Psoas muscle (tissue), 8 donors: ENCODE measurements at regions of chr16 and their contacts with region 1.

Region 1: DNA sequence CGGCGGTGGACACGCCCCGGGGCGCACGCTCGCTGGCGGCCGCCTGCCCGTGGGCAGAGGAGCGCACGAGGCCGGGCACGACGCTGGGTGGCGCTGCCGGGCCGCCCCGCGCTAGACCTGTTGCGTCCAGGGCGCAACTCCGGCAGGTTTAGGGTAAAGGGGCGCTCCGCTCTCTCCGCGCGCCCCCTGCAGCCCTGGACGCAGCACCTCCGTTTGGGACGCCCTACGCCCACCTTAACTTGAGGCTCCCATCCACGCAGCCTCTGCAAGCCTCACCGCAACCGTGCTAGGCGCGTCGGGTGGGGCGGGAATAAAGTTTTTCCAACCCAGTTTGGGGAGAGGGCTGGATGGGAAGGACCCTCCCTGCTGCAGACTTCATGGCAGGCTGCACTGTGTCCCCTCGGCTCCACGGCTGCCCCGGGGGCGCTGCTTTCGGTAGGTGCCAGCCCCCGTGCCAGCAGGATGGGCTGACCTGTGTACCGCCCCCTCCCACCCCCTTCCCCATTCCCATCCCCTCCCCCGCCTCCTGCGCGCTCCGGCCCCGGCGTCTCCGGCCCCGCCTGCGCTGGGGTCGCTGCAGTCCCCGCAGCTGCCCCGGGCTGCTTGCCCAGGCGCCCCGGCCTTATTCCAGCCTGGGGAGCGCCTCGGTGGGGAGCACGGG is at the start of gene SYT17:
- DNase-seq: peak; percentile 71 to 74
- ATAC-seq: peak; percentile 79 to 92 (median 82)
- H3K4me3 ChIP-seq: peak within 1 kb of the TSS; percentile 64
- H3K27ac ChIP-seq: no peak within 1 kb of the TSS
- H3K4me1 ChIP-seq: peaks cover 7% of the 10 kb centered on the region
- H3K27me3 ChIP-seq: peaks cover 0 to 26% (median 0%) of the 10 kb centered on the region in 3 donors
- CTCF ChIP-seq: peak; percentile 67
- total RNA-seq, gene SYT17: 0.08 to 0.58 (median 0.45) TPM

Region 2: DNA sequence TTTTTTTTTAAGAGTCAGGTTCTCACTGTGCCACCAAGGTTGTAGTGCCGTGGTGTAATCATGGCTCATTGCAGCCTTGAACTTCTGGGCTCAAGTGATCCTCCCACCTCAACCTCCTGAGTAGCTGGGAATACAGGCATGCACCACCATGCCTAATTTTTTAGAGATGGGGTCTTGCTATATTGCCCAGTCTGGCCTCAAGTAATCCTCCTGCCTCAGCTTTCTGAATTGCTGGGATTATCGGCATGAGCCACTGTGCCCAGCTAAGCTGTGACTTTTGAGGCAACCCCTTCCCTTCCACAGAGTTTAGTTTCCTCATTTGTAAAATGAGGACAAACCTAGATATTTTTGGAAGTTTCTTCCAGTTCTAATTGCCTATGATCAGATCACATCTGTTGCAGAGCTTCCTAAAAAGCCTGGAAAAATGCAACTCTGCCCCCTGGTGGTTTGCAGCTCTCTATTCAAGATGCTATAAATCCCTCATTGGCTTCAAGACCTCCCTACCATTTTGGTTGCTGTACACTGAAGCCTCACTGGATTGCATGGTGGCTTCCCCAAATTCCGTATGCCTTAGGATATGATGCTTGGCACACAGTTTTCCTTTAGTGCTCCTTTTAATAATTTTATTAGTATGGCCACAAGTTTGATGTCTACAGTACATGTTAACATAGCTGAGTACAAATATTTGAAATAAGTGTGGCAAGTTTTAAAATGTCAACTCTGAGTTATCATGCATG is 334.7 kb after region 1 on chr16:
- intact Hi-C with region 1: loop called in 1 of 2 experiments (anchors 5 kb)
- DNase-seq: peak; percentile 54 to 58
- ATAC-seq: peak; percentile 39 to 78 (median 60)
- H3K4me3 ChIP-seq: no peak overlapping the region
- H3K27ac ChIP-seq: no peak overlapping the region
- H3K4me1 ChIP-seq: no peaks in the 10 kb centered on the region
- H3K27me3 ChIP-seq: no peaks in the 10 kb centered on the region
- CTCF ChIP-seq: peak; percentile 71